ENCODE measurements at regions of chr6 and their contacts with region 1.

Region 1: DNA sequence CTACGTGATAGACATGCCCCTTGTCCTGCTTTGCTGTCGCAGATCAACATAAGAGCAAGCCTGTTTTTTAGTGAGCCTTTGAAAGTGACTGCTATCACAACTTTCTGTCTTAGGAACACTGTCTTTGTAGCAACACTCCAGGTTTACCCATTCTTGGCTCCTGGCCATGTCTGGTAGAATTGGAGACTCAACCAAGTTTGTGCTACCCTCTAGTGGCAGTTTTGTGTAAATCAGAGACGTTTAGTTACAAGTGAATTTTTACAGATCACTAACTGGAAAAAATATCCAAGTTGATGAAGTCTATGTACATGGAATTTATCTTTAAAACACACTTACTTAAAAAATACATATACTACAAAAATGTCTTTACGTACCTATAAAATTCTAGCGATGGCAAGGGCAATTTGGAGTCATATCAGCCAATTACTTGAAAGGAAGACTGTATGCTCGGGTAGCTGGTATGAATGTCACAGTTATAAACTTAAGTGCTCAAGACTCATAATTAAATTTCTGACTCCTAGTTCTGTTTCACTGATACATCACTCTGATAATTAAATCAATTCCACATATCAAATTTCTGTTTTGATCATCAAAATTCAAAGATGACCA is 101.4 kb downstream of the ADGB start:
- DNase-seq: peak; percentile 78
- H3K4me3 ChIP-seq: no peak overlapping the region
- H3K27ac ChIP-seq: no peak overlapping the region
- H3K4me1 ChIP-seq: no peaks in the 10 kb centered on the region
- H3K27me3 ChIP-seq: no peaks in the 10 kb centered on the region
- CTCF ChIP-seq: peak; percentile 70 to 82 (median 71)
- EP300 ChIP-seq: no peak
- POLR2A ChIP-seq: no peak

Region 2: DNA sequence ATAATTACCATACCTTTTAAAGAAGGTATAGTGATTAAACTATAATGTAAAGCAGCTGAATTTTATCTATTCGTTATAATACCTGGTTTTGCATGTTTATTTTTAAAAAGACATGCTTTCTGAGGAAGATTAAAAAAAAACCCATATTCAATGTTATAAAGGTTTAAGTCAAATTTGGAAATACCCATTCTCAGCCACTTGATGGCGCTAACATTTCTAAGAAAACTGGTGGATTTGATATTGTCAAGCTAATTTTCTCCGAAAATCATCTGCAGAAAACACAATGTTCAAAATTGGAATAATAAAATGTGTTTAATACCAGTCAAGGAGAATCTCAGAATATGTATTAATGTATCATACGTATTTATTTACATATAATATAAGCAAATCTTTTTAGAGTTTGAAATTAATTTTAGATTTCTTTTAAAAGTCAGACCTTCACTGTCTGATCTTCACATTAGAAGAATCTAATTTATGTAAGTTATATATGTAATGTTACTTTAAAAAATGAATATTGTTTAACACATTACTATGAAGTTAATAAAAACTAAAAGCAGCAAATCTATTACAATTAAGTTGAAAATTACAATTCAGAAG is 771.0 kb before region 1 on chr6:
- in situ Hi-C with region 1: loop called in 1 of 4 experiments (anchors 25 kb)
- intact Hi-C with region 1: no loop called
- DNase-seq: no peak
- H3K4me3 ChIP-seq: no peak overlapping the region
- H3K27ac ChIP-seq: no peak overlapping the region
- H3K4me1 ChIP-seq: no peaks in the 10 kb centered on the region
- H3K27me3 ChIP-seq: no peaks in the 10 kb centered on the region
- CTCF ChIP-seq: peak; percentile 44 to 68 (median 59)
- EP300 ChIP-seq: no peak
- POLR2A ChIP-seq: no peak

Region 3: DNA sequence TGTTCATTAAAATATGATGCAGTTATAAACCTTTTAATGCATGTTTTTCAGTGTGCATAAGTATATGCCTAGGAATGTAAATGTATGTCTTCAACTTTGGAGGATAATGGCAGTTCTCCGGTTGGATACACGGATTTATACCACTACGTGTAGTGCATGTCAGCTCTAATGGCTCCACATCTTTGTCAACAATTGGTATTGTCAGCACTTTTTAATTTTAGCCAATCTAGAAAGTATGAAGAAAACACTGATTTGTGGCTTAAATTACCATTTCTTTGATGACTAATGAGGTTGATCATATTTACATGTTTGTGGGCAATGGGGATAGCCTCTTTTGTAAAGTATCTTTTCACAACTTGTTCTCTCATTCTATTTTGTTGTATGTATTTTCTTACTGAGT is 167.5 kb before region 1 on chr6:
- in situ Hi-C with region 1: loop called in 2 of 4 experiments (anchors 10 kb)
- intact Hi-C with region 1: no loop called
- DNase-seq: no peak
- H3K4me3 ChIP-seq: no peak overlapping the region
- H3K27ac ChIP-seq: no peak overlapping the region
- H3K4me1 ChIP-seq: no peaks in the 10 kb centered on the region
- H3K27me3 ChIP-seq: no peaks in the 10 kb centered on the region
- CTCF ChIP-seq: no peak
- EP300 ChIP-seq: no peak
- POLR2A ChIP-seq: no peak

Region 4: GRCh38 chr6:146582885-146583284 is 117.3 kb before region 1 on chr6:
- in situ Hi-C with region 1: no loop called
- intact Hi-C with region 1: no loop called
- DNase-seq: peak; percentile 30
- H3K4me3 ChIP-seq: no peak overlapping the region
- H3K27ac ChIP-seq: no peak overlapping the region
- H3K4me1 ChIP-seq: no peaks in the 10 kb centered on the region
- H3K27me3 ChIP-seq: no peaks in the 10 kb centered on the region
- CTCF ChIP-seq: no peak
- EP300 ChIP-seq: no peak
- POLR2A ChIP-seq: no peak